Naive thymus-derived CD4-positive, alpha-beta T cell (primary cell): ENCODE measurements at regions of chr16 and their contacts with region 1.

Region 1: DNA sequence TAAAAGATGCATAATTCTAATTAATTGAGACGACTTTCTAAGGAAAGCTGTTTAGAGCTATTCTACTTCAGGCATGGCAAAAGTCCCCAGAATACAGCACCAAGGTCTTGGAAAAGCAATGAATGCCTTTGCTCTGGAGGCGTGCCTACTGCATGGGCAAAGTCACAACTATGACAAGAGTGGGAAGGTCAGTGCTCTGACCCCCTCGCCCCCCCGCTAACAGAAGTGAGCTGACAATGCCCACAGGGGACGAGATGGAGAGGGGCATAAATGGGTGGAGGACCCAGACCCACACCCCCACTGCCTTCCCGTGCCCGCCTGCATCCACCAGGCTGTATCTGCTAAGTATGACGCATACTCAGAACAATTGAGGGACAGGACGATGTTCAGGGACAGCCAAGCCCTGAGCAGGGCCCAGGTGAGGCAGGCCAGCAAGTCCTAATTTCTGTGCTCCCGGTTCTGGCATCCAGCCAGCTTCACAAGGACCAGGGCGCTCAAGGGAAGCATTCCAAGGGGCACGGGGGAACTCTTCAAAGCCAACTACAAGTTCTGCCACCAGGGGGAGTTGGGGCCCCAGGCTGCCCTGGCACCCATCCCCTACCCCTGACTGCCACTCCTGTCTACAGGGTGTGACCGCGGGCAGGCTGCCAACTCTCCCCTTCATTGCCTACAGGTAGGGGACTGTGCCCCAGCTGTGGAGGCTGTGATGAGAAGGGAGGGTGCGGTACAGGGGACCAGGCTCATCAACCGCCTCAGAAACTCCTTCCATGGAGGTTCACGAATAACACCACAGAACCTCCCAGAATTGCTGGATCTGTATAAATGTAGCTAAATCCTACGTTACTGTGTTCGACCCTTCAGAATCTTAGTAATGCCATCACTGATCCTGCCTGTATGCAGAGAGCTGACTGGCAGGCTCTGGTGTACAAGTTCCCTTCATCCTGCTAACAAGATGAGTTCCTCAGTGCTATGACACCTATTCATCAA is 20.8 kb downstream of the NPRL3 start:
- DNase-seq: peak; percentile 39 to 74 (median 63)
- ATAC-seq: peak; percentile 87
- H3K4me3 ChIP-seq: no peak overlapping the region
- H3K4me3 Mint-ChIP-seq: no peak overlapping the region
- H3K27ac ChIP-seq: no peak overlapping the region
- H3K27ac Mint-ChIP-seq: no peak overlapping the region
- H3K4me1 ChIP-seq: peaks cover 3 to 5% of the 10 kb centered on the region in 2 donors
- H3K4me1 Mint-ChIP-seq: peaks cover 0 to 6% (median under 1%) of the 10 kb centered on the region in 7 donors
- H3K27me3 ChIP-seq: no peaks in the 10 kb centered on the region
- H3K27me3 Mint-ChIP-seq: no peaks in the 10 kb centered on the region

Region 2: GRCh38 chr16:45454-45853 is 72.2 kb before region 1 on chr16:
- CTCF ChIA-PET with region 1: no interaction called
- POLR2A ChIA-PET with region 1: no interaction called
- intact Hi-C with region 1: no loop called
- DNase-seq: no peak
- ATAC-seq: no peak
- H3K4me3 ChIP-seq: no peak overlapping the region
- H3K4me3 Mint-ChIP-seq: no peak overlapping the region
- H3K27ac ChIP-seq: no peak overlapping the region
- H3K27ac Mint-ChIP-seq: no peak overlapping the region
- H3K4me1 ChIP-seq: peaks cover 0 to 9% of the 10 kb centered on the region in 2 donors
- H3K4me1 Mint-ChIP-seq: peaks cover 18 to 35% (median 29%) of the 10 kb centered on the region in 7 donors
- H3K27me3 ChIP-seq: no peaks in the 10 kb centered on the region
- H3K27me3 Mint-ChIP-seq: no peaks in the 10 kb centered on the region

Region 3: DNA sequence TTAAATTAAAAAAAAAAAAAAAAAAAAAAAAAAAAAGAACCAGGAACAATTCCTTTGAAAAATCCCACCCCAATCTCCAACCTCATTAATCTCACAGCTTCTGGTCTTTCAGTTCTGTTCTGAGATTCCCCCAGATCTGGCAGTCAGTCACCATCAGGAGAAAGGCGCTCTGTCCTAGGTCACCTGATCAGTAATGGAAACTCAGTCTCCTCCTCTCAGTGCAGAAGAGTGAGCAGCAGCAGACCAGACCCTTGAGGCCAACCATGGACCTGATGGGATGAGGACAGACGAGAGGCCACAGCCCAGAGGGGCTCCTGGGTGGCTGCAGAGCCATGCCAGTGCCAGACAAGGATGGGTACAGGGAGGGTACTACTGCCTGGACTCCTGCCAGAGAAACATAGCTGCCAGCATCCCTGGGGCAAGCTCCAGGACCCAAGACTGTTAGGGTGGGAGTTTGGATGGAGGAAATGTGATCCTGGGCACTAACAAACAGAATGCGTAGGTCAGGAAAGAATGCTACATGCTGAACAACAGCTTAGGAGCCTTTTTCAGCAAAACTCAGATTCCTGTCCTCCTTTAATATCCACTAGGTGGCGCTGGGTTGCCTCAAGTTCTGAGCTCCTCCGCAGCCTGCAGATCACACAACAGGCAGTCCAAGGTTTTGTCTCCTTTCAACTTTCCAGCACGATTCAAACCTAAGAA is 10.9 kb before region 1 on chr16:
- CTCF ChIA-PET with region 1: interaction called, 15 read pairs
- POLR2A ChIA-PET with region 1: interaction called, 4 read pairs
- intact Hi-C with region 1: no loop called
- DNase-seq: peak in 8 of 9 donors; percentile 37 to 73 (median 64)
- ATAC-seq: peak; percentile 89
- H3K4me3 ChIP-seq: no peak overlapping the region
- H3K4me3 Mint-ChIP-seq: no peak overlapping the region
- H3K27ac ChIP-seq: no peak overlapping the region
- H3K27ac Mint-ChIP-seq: peak overlapping the region in 3 of 9 donors; percentile 6 to 62 (median 39)
- H3K4me1 ChIP-seq: no peaks in the 10 kb centered on the region
- H3K4me1 Mint-ChIP-seq: peaks cover 0 to 7% (median 4%) of the 10 kb centered on the region in 7 donors
- H3K27me3 ChIP-seq: no peaks in the 10 kb centered on the region
- H3K27me3 Mint-ChIP-seq: no peaks in the 10 kb centered on the region

Region 4: GRCh38 chr16:252366-253337 is 135.0 kb after region 1 on chr16:
- CTCF ChIA-PET with region 1: no interaction called
- POLR2A ChIA-PET with region 1: no interaction called
- intact Hi-C with region 1: no loop called
- DNase-seq: peak in 7 of 9 donors; percentile 13 to 56 (median 27)
- ATAC-seq: peak; percentile 61
- H3K4me3 ChIP-seq: peak overlapping the region; percentile 60
- H3K4me3 Mint-ChIP-seq: peak overlapping the region; percentile 81 to 93 (median 86)
- H3K27ac ChIP-seq: peak overlapping the region; percentile 72
- H3K27ac Mint-ChIP-seq: peak overlapping the region; percentile 83 to 98 (median 94)
- H3K4me1 ChIP-seq: peaks cover 9 to 20% of the 10 kb centered on the region in 2 donors
- H3K4me1 Mint-ChIP-seq: peaks cover 12 to 44% (median 28%) of the 10 kb centered on the region in 7 donors
- H3K27me3 ChIP-seq: no peaks in the 10 kb centered on the region
- H3K27me3 Mint-ChIP-seq: no peaks in the 10 kb centered on the region

Region 5: GRCh38 chr16:309476-309875 is 191.8 kb after region 1 on chr16:
- CTCF ChIA-PET with region 1: no interaction called
- POLR2A ChIA-PET with region 1: no interaction called
- intact Hi-C with region 1: loop called in 1 of 2 experiments (anchors 5 kb)
- DNase-seq: peak in 5 of 9 donors; percentile 33 to 52 (median 40)
- ATAC-seq: peak; percentile 60
- H3K4me3 ChIP-seq: no peak overlapping the region
- H3K4me3 Mint-ChIP-seq: peak overlapping the region in 3 of 10 donors; percentile 28 to 57 (median 39)
- H3K27ac ChIP-seq: no peak overlapping the region
- H3K27ac Mint-ChIP-seq: peak overlapping the region in 7 of 9 donors; percentile 25 to 82 (median 69)
- H3K4me1 ChIP-seq: peaks cover 0 to 4% of the 10 kb centered on the region in 2 donors
- H3K4me1 Mint-ChIP-seq: peaks cover 10 to 37% (median 20%) of the 10 kb centered on the region in 7 donors
- H3K27me3 ChIP-seq: no peaks in the 10 kb centered on the region
- H3K27me3 Mint-ChIP-seq: no peaks in the 10 kb centered on the region

Region 6: DNA sequence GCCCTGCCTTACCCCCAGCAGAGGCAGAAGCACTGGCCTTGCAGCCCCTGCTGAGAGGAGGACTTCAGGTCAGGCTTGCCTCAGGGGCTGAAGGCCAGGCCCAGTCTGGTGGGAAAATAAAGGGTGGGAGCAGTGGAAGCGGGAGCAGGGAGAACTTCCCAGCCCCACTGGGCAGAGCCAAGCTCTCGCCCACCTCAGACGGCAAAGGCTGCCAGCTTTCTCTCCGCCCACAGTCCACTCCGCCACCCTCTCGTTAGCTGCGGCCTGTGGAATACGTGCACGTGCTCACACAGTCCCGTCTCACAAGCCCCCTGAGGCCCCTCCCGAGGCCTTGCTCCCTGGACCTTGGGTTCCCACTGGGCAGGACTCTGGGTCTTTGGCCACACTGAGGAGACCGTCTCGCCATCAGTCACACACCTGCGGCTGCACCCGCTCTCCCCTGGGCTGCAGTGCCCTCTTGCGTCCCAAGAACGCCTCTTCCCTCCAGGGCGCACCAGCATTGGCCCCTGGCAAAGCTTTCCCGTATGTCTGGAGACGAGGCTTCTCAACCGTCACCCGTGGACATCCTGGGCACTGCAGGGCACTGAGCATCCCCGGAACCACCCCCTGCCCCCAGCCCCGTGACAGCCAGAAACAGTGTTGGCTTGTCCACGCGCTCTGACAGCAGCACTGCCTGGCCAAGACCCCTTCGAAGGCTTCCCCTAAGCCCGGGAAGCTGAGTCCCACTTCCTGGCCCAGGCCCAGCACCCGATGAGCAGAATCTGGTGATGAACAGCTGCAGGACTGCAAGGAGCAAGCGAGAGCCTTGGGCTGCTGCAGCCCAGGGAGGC is 244.4 kb after region 1 on chr16:
- CTCF ChIA-PET with region 1: interaction called, 18 read pairs
- POLR2A ChIA-PET with region 1: interaction called, 8 read pairs
- intact Hi-C with region 1: loop called (anchors 1 kb)
- DNase-seq: peak; percentile 43 to 74 (median 70)
- ATAC-seq: peak; percentile 92
- H3K4me3 ChIP-seq: no peak overlapping the region
- H3K4me3 Mint-ChIP-seq: peak overlapping the region in 8 of 10 donors; percentile 12 to 77 (median 54)
- H3K27ac ChIP-seq: no peak overlapping the region
- H3K27ac Mint-ChIP-seq: peak overlapping the region in 7 of 9 donors; percentile 32 to 84 (median 69)
- H3K4me1 ChIP-seq: no peaks in the 10 kb centered on the region
- H3K4me1 Mint-ChIP-seq: peaks cover 0 to 12% (median 6%) of the 10 kb centered on the region in 7 donors
- H3K27me3 ChIP-seq: no peaks in the 10 kb centered on the region
- H3K27me3 Mint-ChIP-seq: peaks cover 0 to 4% (median 0%) of the 10 kb centered on the region in 5 donors